Astrocyte of the cerebellum (primary cell): ENCODE measurements at regions of chr18 and their contacts with region 1.

Region 1: GRCh38 chr18:12744103-12744502 is 41.3 kb downstream of the PSMG2 start:
- DNase-seq: peak; percentile 63
- H3K4me3 ChIP-seq: no peak overlapping the region
- CTCF ChIP-seq: peak; percentile 45

Region 2: DNA sequence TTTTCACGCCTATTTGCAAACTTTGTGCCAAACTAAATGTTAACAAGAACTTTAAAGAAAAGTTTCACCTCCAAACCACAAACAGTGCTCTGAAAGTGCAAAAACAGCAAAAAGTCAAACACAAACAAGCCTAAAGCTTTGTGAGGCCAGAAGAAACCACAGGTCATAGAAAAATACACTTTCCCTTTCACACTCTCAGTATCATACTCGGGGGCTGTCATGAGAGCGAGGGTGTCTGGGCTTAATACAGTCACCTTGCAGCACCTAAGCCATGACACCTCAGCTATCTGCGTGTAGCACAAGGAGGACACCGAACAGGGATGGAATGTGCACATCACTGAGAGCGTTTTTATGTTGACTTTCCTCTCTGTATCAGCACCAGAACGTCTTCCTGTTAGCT is 177.1 kb after region 1 on chr18:
- in situ Hi-C with region 1: loop called (anchors 10 kb)
- DNase-seq: no peak
- H3K4me3 ChIP-seq: no peak overlapping the region
- CTCF ChIP-seq: no peak